ENCODE measurements at regions of chr3 and their contacts with region 1.

Region 1: GRCh38 chr3:138051946-138052802 is 42.2 kb downstream of the CLDN18 start:
- DNase-seq: peak; percentile 62
- ATAC-seq: peak; percentile 67
- H3K4me3 ChIP-seq: no peak overlapping the region
- H3K27ac ChIP-seq: no peak overlapping the region
- H3K4me1 ChIP-seq: peaks cover 11% of the 10 kb centered on the region
- H3K27me3 ChIP-seq: no peaks in the 10 kb centered on the region
- CTCF ChIP-seq: peak; percentile 78
- POLR2A ChIP-seq: no peak
- RAD21 ChIP-seq: peak; percentile 81

Region 2: GRCh38 chr3:136893848-136894443 is 1158.2 kb before region 1 on chr3:
- CTCF ChIA-PET with region 1: no interaction called
- POLR2A ChIA-PET with region 1: no interaction called
- dilution Hi-C with region 1: no loop called
- in situ Hi-C with region 1: no loop called
- intact Hi-C with region 1: loop called (anchors 5 kb)
- DNase-seq: peak; percentile 92
- ATAC-seq: peak; percentile 89
- H3K4me3 ChIP-seq: no peak overlapping the region
- H3K27ac ChIP-seq: peak overlapping the region; percentile 71; the same call in 1 of the 2 replicates
- H3K4me1 ChIP-seq: peaks cover 10% of the 10 kb centered on the region
- H3K27me3 ChIP-seq: no peaks in the 10 kb centered on the region
- CTCF ChIP-seq: no peak
- POLR2A ChIP-seq: no peak
- RAD21 ChIP-seq: no peak

Region 3: DNA sequence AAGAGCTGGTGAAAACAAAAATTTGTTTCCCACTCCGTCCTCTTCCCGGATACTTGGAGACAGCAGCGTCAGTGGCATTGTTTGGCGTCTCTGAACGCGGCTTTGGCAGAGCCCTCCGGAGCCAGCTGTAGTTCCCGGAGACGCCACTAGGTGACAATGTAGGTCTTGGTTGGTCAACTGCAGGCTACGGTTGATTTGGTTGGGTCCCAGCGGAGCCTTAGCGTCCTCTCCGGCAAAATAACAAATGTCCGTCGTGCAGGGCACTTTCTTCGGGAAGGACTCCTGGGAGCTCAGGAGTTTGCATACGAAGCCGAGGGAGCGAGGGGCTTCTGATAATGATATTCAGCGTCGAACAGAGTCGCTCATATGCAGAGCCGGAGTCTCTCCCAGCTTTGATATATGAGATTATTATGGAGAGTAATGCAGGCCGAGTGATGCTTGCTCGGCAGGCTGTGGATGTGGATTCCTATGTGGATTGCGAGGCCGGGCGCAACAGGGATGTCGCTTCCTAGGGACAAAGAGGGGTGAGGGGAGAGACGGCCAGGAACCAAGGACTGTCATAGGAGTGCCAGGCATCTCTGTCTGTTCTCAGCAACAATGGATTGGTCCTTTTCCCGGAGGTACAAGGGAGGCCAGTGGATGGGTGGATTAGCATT is 1019.6 kb before region 1 on chr3:
- CTCF ChIA-PET with region 1: interaction called, 3 read pairs
- POLR2A ChIA-PET with region 1: no interaction called
- dilution Hi-C with region 1: no loop called
- in situ Hi-C with region 1: no loop called
- intact Hi-C with region 1: loop called (anchors 10 kb)
- DNase-seq: peak; percentile 76
- ATAC-seq: peak; percentile 98
- H3K4me3 ChIP-seq: peak overlapping the region; percentile 41
- H3K27ac ChIP-seq: no peak overlapping the region
- H3K4me1 ChIP-seq: no peaks in the 10 kb centered on the region
- H3K27me3 ChIP-seq: peaks cover 2% of the 10 kb centered on the region
- CTCF ChIP-seq: peak; percentile 83
- POLR2A ChIP-seq: no peak
- RAD21 ChIP-seq: peak; percentile 73

Region 4: DNA sequence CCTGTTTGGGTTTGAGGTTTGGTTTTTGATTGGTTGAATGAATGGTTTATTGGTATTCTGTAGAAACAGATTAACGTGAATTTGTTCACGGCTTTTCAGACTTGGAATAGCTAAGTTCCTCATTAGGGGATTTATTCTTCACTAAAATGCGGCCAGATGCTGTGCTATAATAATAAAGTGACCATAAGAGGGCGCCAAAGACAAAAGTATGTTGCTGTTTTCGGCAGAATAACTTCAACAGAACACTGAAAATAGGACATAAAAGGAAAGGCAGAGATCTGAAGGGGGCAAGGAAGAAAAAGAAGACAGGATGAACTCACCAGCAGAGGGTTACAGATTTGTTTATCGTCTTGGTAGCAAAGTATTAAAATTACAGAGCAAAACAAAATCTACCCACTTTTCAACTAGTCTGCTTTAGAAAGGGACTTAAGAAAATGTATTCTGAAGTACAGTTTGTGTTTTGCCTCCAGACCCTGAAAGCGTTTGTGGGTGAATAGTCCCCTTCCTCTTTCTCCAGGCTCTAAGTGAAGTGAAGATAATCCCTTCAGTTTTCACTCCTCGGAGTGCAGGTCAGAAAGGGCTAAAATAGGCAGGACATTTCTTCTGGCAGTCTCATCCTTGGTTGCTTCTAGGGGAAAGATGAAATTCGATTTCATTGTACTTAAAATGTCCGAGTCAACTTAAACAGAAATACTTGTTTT is 946.7 kb before region 1 on chr3:
- CTCF ChIA-PET with region 1: interaction called, 8 read pairs
- POLR2A ChIA-PET with region 1: no interaction called
- dilution Hi-C with region 1: no loop called
- in situ Hi-C with region 1: no loop called
- intact Hi-C with region 1: loop called (anchors 1 kb)
- DNase-seq: peak; percentile 62
- ATAC-seq: peak; percentile 88
- H3K4me3 ChIP-seq: no peak overlapping the region
- H3K27ac ChIP-seq: no peak overlapping the region
- H3K4me1 ChIP-seq: no peaks in the 10 kb centered on the region
- H3K27me3 ChIP-seq: peaks cover 5% of the 10 kb centered on the region
- CTCF ChIP-seq: peak; percentile 70
- POLR2A ChIP-seq: no peak
- RAD21 ChIP-seq: peak; percentile 63

Region 5: GRCh38 chr3:137792626-137793271 is 259.4 kb before region 1 on chr3:
- CTCF ChIA-PET with region 1: no interaction called
- POLR2A ChIA-PET with region 1: no interaction called
- dilution Hi-C with region 1: no loop called
- in situ Hi-C with region 1: no loop called
- intact Hi-C with region 1: loop called (anchors 10 kb)
- DNase-seq: peak; percentile 27
- ATAC-seq: no peak
- H3K4me3 ChIP-seq: no peak overlapping the region
- H3K27ac ChIP-seq: no peak overlapping the region
- H3K4me1 ChIP-seq: no peaks in the 10 kb centered on the region
- H3K27me3 ChIP-seq: no peaks in the 10 kb centered on the region
- CTCF ChIP-seq: peak; percentile 54
- POLR2A ChIP-seq: no peak
- RAD21 ChIP-seq: peak; percentile 59

Region 6: DNA sequence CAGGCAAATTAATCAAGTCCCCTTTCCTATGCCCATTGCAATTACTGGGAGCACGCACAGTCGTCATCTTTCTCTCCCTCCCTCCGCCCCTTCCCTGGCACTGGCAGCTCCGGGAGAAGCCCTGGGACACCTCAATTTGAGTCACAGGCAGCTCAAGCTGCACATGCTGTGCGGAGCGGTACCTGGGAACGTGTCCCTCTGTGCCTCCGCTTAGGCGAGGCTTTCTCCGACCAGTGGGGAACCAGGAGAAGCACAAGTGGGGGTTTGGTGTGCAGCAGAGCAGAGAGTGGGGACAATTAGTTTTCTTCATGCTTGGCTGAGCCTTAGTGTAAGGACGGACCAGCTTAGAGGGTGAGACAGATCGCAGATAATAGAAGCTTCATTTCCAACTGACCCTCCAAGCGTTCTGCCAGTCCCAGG is 199.8 kb before region 1 on chr3:
- CTCF ChIA-PET with region 1: no interaction called
- POLR2A ChIA-PET with region 1: no interaction called
- dilution Hi-C with region 1: no loop called
- in situ Hi-C with region 1: no loop called
- intact Hi-C with region 1: no loop called
- DNase-seq: no peak
- ATAC-seq: no peak
- H3K4me3 ChIP-seq: no peak overlapping the region
- H3K27ac ChIP-seq: no peak overlapping the region
- H3K4me1 ChIP-seq: no peaks in the 10 kb centered on the region
- H3K27me3 ChIP-seq: no peaks in the 10 kb centered on the region
- CTCF ChIP-seq: no peak
- POLR2A ChIP-seq: no peak
- RAD21 ChIP-seq: no peak

Region 7: DNA sequence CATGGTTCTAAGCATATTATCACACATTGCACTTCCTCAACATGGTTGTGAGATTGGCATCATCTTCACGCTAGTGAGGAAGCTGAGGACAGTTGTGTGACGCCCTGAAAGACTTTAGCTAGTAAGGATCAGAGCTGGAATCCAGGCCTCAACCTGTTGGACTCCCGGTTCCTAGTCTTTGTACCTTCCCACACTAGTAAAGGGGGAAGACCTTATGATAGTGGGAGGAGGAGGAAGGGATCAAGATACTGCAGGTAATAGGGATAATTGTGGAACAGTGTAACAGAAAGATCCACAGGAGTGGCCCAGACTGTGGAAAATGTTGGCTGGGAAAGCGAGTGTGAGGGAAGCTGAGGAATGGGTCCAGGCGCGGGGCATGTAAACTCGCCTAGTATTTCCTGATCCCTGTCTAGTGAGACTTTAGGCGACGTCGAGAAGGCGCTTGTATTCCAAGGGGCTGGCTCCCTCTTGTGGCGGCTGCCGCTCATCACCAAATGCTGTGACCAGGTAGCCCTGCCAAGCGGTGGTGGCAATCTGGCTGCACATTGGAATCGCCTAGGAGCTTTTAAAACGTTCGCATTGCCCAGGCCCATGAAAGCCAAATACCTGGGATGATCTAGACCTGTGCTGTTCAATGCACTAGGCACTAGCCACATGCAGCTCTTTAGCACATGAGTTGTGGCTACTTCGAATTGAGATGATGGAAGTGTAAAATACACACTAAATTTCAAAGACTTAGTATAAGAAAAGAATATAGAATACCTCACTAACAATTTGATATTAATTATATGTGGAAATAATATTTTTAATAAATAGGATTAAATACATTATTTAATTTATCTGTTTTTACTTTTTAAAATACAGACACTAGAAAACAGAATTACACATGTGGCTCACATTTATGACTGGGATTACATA is 81.0 kb before region 1 on chr3:
- CTCF ChIA-PET with region 1: interaction called, 5 read pairs
- POLR2A ChIA-PET with region 1: no interaction called
- dilution Hi-C with region 1: no loop called
- in situ Hi-C with region 1: no loop called
- intact Hi-C with region 1: loop called (anchors 1 kb)
- DNase-seq: peak; percentile 50
- ATAC-seq: peak; percentile 99
- H3K4me3 ChIP-seq: no peak overlapping the region
- H3K27ac ChIP-seq: no peak overlapping the region
- H3K4me1 ChIP-seq: no peaks in the 10 kb centered on the region
- H3K27me3 ChIP-seq: peaks cover 1% of the 10 kb centered on the region
- CTCF ChIP-seq: peak; percentile 81
- POLR2A ChIP-seq: no peak
- RAD21 ChIP-seq: peak; percentile 72

Measured in IMR-90 (cell line).